T-cell (primary cell): ENCODE measurements at regions of chr6 and their contacts with region 1.

Region 1: GRCh38 chr6:73329201-73329600 is 24.9 kb downstream of the DPPA5 start:
- DNase-seq: no peak
- ATAC-seq: no peak
- H3K4me3 ChIP-seq: no peak overlapping the region
- H3K4me3 Mint-ChIP-seq: no peak overlapping the region
- H3K27ac ChIP-seq: no peak overlapping the region
- H3K27ac Mint-ChIP-seq: no peak overlapping the region
- H3K4me1 ChIP-seq: no peaks in the 10 kb centered on the region
- H3K4me1 Mint-ChIP-seq: no peaks in the 10 kb centered on the region
- H3K27me3 ChIP-seq: peaks cover 0 to 7% of the 10 kb centered on the region in 2 experiments
- H3K27me3 Mint-ChIP-seq: peaks cover 10 to 16% of the 10 kb centered on the region in 2 donors

Region 2: DNA sequence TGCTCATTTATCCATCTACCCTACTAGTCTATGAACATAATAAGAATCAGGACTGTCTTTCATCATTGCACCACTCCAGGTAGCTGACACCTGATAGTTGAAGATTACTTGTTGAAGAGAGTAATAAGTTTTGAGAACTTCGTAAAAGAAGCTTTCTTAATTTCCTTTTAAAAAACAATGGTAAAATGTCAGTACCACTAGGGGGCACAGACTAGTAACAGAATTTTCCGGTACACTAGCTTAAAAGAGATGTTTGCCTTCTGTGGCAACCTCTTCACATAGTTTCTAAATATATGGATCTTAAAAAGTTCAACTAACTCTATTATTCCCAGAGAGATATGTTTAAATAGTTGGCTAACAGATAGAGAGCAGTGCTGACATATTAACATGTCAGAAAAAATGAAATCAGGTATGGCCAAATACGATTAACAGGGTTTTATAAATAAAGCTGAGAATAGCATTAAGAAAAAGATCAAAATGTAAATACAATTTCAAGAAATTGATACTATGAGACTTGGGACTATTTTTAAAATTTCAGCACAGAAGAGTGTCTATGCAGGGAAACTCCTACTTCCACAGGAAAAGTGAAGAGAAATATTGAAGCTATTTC is 712.7 kb before region 1 on chr6:
- CTCF ChIA-PET with region 1: interaction called in 1 of 2 experiments, 18 read pairs
- POLR2A ChIA-PET with region 1: no interaction called
- DNase-seq: peak in 1 of 35 experiments; percentile 65
- ATAC-seq: no peak
- H3K4me3 ChIP-seq: no peak overlapping the region
- H3K4me3 Mint-ChIP-seq: no peak overlapping the region
- H3K27ac ChIP-seq: no peak overlapping the region
- H3K27ac Mint-ChIP-seq: peak overlapping the region in 1 of 2 donors; percentile 73
- H3K4me1 ChIP-seq: peaks cover 24 to 37% of the 10 kb centered on the region in 2 experiments
- H3K4me1 Mint-ChIP-seq: peaks cover 39 to 55% (median 46%) of the 10 kb centered on the region in 3 donors
- H3K27me3 ChIP-seq: peaks cover 0 to 10% of the 10 kb centered on the region in 2 experiments
- H3K27me3 Mint-ChIP-seq: no peaks in the 10 kb centered on the region

Region 3: GRCh38 chr6:73285674-73286283 is 43.4 kb before region 1 on chr6:
- CTCF ChIA-PET with region 1: interaction called, 3 to 23 read pairs
- POLR2A ChIA-PET with region 1: no interaction called
- DNase-seq: peak in 1 of 35 experiments; percentile 28
- ATAC-seq: no peak
- H3K4me3 ChIP-seq: no peak overlapping the region
- H3K4me3 Mint-ChIP-seq: no peak overlapping the region
- H3K27ac ChIP-seq: no peak overlapping the region
- H3K27ac Mint-ChIP-seq: no peak overlapping the region
- H3K4me1 ChIP-seq: no peaks in the 10 kb centered on the region
- H3K4me1 Mint-ChIP-seq: no peaks in the 10 kb centered on the region
- H3K27me3 ChIP-seq: no peaks in the 10 kb centered on the region
- H3K27me3 Mint-ChIP-seq: no peaks in the 10 kb centered on the region

Region 4: DNA sequence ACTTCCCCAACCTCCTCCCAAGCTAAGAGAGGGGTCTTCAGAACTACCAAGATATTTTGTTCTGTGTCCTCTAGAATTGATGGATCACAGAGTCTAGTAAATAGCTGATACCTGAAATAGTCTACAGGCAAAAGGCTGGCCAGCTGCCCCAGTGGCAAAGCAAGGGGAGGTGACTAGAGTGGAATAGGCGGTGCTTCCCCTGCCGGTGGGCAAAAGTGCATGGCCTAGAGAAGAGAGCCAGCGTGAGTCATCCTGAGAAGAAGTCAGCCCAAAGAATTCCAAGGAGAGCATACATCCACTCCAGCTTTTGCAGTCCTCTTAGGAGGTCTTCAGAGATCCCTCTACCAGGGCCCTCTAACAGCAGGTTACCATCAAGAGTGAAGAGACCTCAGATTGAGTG is 10.1 kb after region 1 on chr6:
- CTCF ChIA-PET with region 1: interaction called, 4 to 10 read pairs
- POLR2A ChIA-PET with region 1: interaction called in 1 of 2 experiments, 3 read pairs
- DNase-seq: no peak
- ATAC-seq: no peak
- H3K4me3 ChIP-seq: no peak overlapping the region
- H3K4me3 Mint-ChIP-seq: no peak overlapping the region
- H3K27ac ChIP-seq: no peak overlapping the region
- H3K27ac Mint-ChIP-seq: no peak overlapping the region
- H3K4me1 ChIP-seq: no peaks in the 10 kb centered on the region
- H3K4me1 Mint-ChIP-seq: no peaks in the 10 kb centered on the region
- H3K27me3 ChIP-seq: no peaks in the 10 kb centered on the region
- H3K27me3 Mint-ChIP-seq: peaks cover 0 to under 1% of the 10 kb centered on the region in 2 donors